Adrenal gland (tissue), 19 donors: ENCODE measurements at regions of chr16 and their contacts with region 1.

Region 1: DNA sequence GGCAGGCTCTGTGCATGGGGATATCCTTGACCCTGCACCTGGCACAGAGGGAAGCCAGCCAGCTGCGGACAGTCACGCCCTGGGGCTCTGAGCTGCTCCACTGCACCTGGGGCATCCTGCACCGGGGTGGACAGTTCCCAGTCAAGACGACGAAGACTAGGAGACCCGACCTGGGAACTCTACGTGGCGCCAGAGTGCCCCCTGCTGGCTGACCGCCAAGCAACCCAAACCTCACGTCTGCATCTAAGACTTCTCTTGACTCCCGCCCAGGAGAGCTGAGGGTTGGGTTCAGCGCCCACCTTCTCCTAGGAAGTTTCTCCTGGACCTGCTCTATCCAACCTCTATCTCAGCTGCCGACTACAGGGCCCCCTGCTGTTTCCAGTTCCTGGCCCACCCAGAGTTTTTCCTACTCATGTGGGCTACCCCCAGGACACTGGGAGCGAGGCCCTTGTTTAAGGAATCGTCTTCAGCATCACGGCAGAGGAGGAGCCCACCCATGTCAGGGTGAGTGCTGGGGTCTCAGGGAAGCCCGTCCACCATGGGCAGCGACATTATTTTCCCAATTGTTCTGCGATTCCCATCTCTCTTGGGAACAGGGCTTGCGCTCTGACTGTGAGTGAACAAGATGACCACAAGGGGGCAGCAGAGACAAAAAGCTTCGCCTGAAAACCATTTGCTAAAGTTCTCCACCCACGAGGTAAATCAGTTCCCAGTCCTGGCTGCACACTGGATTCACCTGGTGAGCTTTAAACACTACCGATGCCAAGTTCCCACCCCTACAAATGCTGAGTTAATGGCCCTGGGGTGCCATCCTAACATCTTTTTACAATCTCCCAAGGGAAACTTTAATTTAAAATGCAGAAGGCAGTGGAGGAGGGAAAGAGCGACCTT is 29.3 kb downstream of the TLE7 start:
- DNase-seq: peak; percentile 63 to 87 (median 73)
- H3K4me3 ChIP-seq: no peak overlapping the region
- H3K27ac ChIP-seq: no peak overlapping the region
- H3K4me1 ChIP-seq: peaks cover 0 to 6% of the 10 kb centered on the region in 2 donors
- H3K27me3 ChIP-seq: peaks cover 4% of the 10 kb centered on the region
- CTCF ChIP-seq: peak; percentile 78 to 95 (median 86)
- POLR2A ChIP-seq: no peak

Region 2: GRCh38 chr16:71499775-71500364 is 87.4 kb after region 1 on chr16:
- intact Hi-C with region 1: loop called (anchors 5 kb)
- DNase-seq: peak; percentile 26 to 69 (median 48)
- H3K4me3 ChIP-seq: no peak overlapping the region
- H3K27ac ChIP-seq: no peak overlapping the region
- H3K4me1 ChIP-seq: no peaks in the 10 kb centered on the region
- H3K27me3 ChIP-seq: no peaks in the 10 kb centered on the region
- CTCF ChIP-seq: peak; percentile 51 to 81 (median 78)
- POLR2A ChIP-seq: no peak

Region 3: GRCh38 chr16:71610936-71611871 is 198.7 kb after region 1 on chr16:
- intact Hi-C with region 1: loop called (anchors 2 to 5 kb)
- DNase-seq: peak; percentile 67 to 80 (median 72)
- H3K4me3 ChIP-seq: no peak overlapping the region
- H3K27ac ChIP-seq: no peak overlapping the region
- H3K4me1 ChIP-seq: peaks cover 0 to 5% of the 10 kb centered on the region in 2 donors
- H3K27me3 ChIP-seq: peaks cover 4% of the 10 kb centered on the region
- CTCF ChIP-seq: peak; percentile 66 to 94 (median 81)
- POLR2A ChIP-seq: no peak

Region 4: DNA sequence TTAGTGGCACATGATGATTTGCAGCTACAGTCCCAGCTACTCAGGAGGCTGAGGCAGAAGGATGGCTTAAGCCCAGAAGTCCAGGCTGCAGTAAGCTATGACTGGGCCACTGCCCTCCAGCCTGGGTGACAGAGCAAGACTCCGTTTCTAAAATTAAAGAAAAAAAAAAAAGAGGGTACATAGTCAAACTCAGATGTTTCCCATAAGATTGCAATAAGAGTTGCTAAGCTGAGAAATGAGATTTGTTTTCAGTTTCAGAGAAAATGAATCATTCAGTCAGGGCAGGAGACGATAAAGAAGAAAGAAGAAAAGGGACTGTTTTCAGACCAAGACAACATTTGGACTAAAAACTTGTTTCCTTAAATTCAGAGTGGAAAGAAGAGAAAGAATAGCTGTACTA is 342.1 kb after region 1 on chr16:
- intact Hi-C with region 1: no loop called
- DNase-seq: no peak
- H3K4me3 ChIP-seq: no peak overlapping the region
- H3K27ac ChIP-seq: no peak overlapping the region
- H3K4me1 ChIP-seq: peaks cover 0 to 13% of the 10 kb centered on the region in 2 donors
- H3K27me3 ChIP-seq: no peaks in the 10 kb centered on the region
- CTCF ChIP-seq: no peak
- POLR2A ChIP-seq: no peak